Activated naive CD4-positive, alpha-beta T cell treated with anti-CD3 and anti-CD28 coated beads for 36 hours (primary cell): ENCODE measurements at regions of chr4 and their contacts with region 1.

Region 1: GRCh38 chr4:46270986-46271596 is 118.8 kb downstream of the GABRA2 start:
- DNase-seq: no peak
- H3K4me3 Mint-ChIP-seq: no peak overlapping the region
- H3K27ac Mint-ChIP-seq: no peak overlapping the region
- H3K4me1 Mint-ChIP-seq: no peaks in the 10 kb centered on the region
- H3K27me3 Mint-ChIP-seq: no peaks in the 10 kb centered on the region

Region 2: DNA sequence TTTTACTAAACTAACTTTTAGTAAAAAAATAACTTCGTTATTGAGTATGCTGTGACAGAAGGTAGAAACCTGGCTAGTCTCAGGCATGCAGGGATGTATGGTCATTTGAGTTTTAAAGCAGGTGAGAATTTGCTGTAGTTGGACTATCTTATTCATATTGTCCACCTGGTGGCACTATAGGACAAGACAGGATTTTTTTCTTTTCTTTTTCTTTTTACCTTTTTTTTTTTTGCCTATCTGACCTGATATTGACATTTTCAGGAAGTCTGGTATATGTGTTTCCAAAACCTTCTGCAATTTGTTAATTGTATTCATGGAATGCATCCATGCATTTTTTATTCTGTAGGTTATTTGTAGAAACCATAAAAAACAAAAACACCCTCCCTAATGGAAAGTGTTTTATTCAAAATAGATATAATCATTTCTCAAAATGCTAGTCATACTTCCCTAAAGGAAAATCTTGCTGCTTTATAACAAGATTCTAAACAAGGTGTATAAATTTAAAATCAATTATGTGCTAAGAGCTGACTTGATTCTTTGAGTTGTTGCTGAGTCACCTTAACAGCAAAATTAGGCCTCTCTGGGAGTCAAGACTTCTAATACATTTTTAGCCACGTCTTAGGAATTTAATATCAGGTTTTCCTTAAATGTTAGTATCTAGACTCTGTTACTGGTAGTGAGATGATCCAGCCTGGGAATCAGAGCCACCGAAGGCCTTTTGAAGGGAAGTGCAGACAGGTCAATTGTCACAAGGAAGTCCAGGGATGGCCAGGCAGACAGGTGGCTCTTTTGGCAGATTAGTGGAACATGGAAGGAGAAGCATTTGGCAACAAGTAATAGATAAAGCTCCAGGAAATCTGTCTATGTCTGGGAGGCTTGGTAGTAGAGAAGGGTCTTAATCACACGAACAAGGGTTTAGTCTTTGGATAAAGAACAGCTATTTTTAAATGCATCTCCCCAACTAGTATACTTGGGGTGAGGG is 1343.4 kb before region 1 on chr4:
- CTCF ChIA-PET with region 1: no interaction called
- intact Hi-C with region 1: loop called (anchors 5 kb)
- DNase-seq: no peak
- H3K4me3 Mint-ChIP-seq: no peak overlapping the region
- H3K27ac Mint-ChIP-seq: no peak overlapping the region
- H3K4me1 Mint-ChIP-seq: no peaks in the 10 kb centered on the region
- H3K27me3 Mint-ChIP-seq: no peaks in the 10 kb centered on the region

Region 3: DNA sequence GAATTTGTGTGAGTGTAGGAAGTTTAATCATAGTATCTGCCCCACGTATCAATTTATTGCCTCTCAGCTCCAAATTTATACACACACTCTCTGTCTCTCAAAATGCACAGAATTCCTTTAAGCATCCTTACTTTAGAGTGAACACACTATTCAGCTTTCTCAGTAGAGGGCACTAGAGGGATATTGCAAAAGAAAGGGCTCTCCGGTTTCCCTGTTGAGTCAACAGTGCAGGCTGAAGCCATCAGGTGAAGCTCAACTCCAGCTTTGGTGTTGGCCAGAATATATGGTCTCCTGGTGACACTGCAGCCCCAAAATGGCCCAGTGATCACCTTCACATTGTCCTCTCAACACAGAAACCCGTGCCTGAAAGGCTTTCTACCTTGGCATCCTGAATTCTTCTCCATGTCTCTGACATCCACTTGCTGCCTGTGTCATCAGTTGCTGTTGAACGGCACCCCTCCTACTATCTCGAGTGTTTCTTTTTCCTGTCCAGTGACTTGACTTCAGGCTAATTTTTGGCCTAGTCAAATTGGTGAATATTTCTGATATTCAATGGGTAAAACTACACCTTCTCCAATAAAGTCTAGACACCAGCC is 817.7 kb before region 1 on chr4:
- CTCF ChIA-PET with region 1: no interaction called
- intact Hi-C with region 1: loop called (anchors 2 kb)
- DNase-seq: no peak
- H3K4me3 Mint-ChIP-seq: no peak overlapping the region
- H3K27ac Mint-ChIP-seq: no peak overlapping the region
- H3K4me1 Mint-ChIP-seq: no peaks in the 10 kb centered on the region
- H3K27me3 Mint-ChIP-seq: no peaks in the 10 kb centered on the region

Region 4: DNA sequence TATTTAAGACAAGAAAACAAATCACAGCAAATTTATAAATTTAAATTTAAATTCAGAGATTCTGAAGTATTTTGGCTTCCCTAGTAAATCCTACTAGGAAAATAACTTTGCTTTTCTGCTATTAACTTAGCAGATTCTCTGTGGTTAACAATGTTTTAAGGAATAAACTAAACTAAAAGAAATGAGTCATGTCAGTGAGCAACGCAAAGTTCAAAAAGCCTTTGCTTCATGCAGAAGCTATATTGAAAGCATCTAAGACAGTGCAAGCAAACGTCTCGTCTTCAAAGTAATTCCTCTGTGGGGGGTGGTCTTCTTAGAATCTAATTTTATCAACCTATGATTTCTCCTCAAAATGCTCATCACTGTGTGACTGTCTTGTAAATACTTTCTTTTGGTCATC is 790.3 kb after region 1 on chr4:
- CTCF ChIA-PET with region 1: no interaction called
- intact Hi-C with region 1: no loop called
- DNase-seq: no peak
- H3K4me3 Mint-ChIP-seq: no peak overlapping the region
- H3K27ac Mint-ChIP-seq: no peak overlapping the region
- H3K4me1 Mint-ChIP-seq: no peaks in the 10 kb centered on the region
- H3K27me3 Mint-ChIP-seq: peaks cover 2% of the 10 kb centered on the region